ENCODE measurements at regions of chr14 and their contacts with region 1.

Region 1: DNA sequence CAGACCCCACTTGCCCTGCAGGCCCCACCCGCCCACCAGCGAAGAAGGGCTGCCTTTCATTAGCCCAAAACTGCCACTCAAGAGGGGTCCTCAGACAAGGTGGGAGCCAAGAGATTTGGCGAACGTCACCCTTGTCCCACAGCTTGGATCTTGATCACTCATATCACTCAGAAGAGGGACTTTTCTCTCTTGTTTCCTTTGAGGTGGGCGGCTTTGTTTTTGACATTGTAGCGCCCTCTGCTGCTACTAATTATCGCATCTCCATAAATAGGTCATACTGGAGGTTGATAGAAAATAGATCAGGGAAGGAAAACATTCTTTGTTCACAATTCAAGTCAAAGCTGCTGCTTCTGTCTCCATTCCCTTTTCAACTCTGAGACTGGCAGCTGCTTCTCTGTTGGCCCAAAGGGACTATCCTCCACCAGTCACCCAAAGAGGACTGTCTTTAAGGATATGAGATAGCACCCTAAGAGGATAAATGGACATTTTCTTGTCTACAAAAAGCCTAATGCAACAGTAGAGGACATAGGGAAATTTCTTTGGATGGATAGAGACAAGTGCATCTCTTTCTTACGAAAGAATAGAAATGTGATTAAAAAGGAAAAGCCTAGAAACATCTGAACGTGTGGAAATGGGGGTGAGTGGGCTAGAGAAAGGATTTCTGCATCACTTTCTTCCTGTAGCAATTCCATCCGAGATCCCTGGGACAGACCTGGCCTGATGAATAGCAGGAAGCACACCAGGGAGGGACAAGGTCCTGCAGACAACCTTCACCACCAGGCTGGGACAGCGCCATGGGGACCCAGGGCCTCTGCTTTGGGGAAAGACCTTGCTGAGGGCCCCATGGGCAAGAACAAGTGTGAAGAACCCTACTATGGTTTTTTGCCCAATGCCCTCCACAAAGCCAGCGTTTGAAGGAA is 115.8 kb downstream of the DAD1 start:
- DNase-seq: peak in 1 of 2 experiments; percentile 66
- H3K4me3 ChIP-seq: no peak overlapping the region
- H3K27ac ChIP-seq: no peak overlapping the region
- H3K4me1 ChIP-seq: peaks cover 0 to 4% (median under 1%) of the 10 kb centered on the region in 4 experiments; a peak in 2 of 7 replicates
- H3K27me3 ChIP-seq: no peaks in the 10 kb centered on the region; a peak in 1 of 7 replicates
- CTCF ChIP-seq: peak in 2 of 3 experiments; percentile 63 to 75; a peak in 3 of 4 replicates
- EP300 ChIP-seq: no peak
- POLR2A ChIP-seq: no peak
- RAD21 ChIP-seq: peak; percentile 84 to 87

Region 2: DNA sequence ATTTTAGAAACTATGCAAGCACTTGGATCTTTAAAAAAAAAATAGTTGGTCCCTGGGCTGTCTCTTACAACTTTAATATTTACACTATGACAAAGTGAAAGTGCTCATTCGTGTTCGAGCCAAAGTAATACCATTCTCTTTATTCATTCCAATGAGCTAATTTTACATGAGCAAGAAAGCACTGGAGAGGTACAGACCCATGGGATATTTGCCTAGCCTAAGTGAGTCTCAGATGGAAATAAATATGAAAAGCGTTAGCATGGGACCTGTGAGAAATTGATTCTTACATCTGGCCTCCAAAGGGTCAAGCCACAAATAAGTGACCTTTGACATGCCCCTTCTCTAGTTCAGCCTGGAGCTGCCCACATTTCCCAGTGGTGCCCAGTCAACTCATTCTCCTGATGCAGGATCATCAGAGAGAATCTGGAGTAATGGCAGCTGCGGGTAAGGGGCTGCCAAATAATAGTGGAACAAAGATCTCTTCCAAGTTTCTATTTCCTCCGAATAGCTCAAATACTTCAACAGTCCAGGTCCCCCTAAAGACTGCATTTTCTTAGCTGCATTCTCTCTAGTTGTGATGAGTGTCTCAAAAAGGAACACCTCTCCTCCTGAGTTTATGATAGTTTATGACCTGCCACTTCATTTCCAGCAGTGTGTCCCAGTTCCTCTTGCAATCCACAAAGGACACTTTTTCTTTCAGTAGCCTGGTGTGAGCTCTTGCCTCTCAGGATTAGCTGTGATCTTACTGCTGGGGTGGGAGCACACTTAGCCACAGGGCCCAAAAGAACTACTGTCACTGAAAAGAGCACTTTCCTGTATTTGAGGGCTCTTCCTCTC is 92.4 kb before region 1 on chr14:
- CTCF ChIA-PET with region 1: interaction called, 24 read pairs
- POLR2A ChIA-PET with region 1: no interaction called
- DNase-seq: no peak
- H3K4me3 ChIP-seq: no peak overlapping the region
- H3K27ac ChIP-seq: no peak overlapping the region
- H3K4me1 ChIP-seq: no peaks in the 10 kb centered on the region
- H3K27me3 ChIP-seq: no peaks in the 10 kb centered on the region
- CTCF ChIP-seq: no peak
- EP300 ChIP-seq: no peak
- POLR2A ChIP-seq: no peak
- RAD21 ChIP-seq: no peak

Region 3: GRCh38 chr14:22400655-22401259 is 72.4 kb before region 1 on chr14:
- CTCF ChIA-PET with region 1: interaction called, 18 read pairs
- POLR2A ChIA-PET with region 1: no interaction called
- DNase-seq: no peak
- H3K4me3 ChIP-seq: no peak overlapping the region
- H3K27ac ChIP-seq: no peak overlapping the region
- H3K4me1 ChIP-seq: no peaks in the 10 kb centered on the region
- H3K27me3 ChIP-seq: no peaks in the 10 kb centered on the region
- CTCF ChIP-seq: no peak
- EP300 ChIP-seq: no peak
- POLR2A ChIP-seq: no peak
- RAD21 ChIP-seq: no peak

Region 4: DNA sequence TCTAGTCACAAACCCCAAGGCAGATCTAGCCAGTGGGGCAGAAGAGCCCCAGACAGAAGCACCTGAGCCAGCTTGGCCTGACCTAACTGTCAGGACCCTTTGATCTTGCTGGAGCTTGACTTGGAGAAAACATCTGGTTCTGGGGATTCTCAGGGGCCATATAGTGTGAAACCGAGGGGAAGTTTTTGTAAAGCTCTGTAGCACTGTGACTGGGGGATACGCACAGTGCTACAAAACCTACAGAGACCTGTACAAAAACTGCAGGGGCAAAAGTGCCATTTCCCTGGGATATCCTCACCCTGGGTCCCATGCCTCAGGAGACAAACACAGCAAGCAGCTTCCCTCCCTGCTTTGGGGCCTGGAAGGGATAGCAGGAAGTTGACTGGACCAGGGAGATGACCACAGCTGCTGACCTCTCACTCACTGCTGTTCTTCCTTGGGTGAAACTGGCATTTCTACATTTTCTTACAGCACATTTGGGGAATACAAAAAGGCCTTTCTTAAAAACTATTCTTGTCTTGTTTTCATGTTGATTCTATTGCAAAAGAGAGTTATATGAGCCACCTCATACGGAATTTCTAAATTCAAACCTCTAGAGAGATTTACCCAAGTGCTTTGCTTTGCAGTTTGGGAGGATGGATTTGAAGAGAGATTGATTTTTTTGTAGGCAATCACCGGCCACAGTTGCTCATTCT is 24.1 kb before region 1 on chr14:
- CTCF ChIA-PET with region 1: interaction called, 25 read pairs
- POLR2A ChIA-PET with region 1: no interaction called
- DNase-seq: no peak
- H3K4me3 ChIP-seq: no peak overlapping the region
- H3K27ac ChIP-seq: no peak overlapping the region
- H3K4me1 ChIP-seq: no peaks in the 10 kb centered on the region
- H3K27me3 ChIP-seq: no peaks in the 10 kb centered on the region; a peak in 1 of 7 replicates
- CTCF ChIP-seq: no peak
- EP300 ChIP-seq: no peak
- POLR2A ChIP-seq: no peak
- RAD21 ChIP-seq: no peak

Region 5: GRCh38 chr14:22505697-22506377 is 32.6 kb after region 1 on chr14:
- CTCF ChIA-PET with region 1: interaction called, 14 read pairs
- POLR2A ChIA-PET with region 1: no interaction called
- DNase-seq: no peak
- H3K4me3 ChIP-seq: no peak overlapping the region
- H3K27ac ChIP-seq: no peak overlapping the region
- H3K4me1 ChIP-seq: peaks cover 0 to 3% (median 1%) of the 10 kb centered on the region in 4 experiments; a peak in 3 of 7 replicates
- H3K27me3 ChIP-seq: no peaks in the 10 kb centered on the region; a peak in 1 of 7 replicates
- CTCF ChIP-seq: no peak
- EP300 ChIP-seq: no peak
- POLR2A ChIP-seq: peak in 1 of 2 experiments; percentile 66; a peak in 2 of 3 replicates
- RAD21 ChIP-seq: no peak

Region 6: GRCh38 chr14:22589096-22589839 is 116.1 kb after region 1 on chr14 and contains the start of gene DAD1:
- CTCF ChIA-PET with region 1: no interaction called
- POLR2A ChIA-PET with region 1: no interaction called
- DNase-seq: peak; percentile 98 to 99
- H3K4me3 ChIP-seq: peak within 1 kb of the TSS; percentile 81 to 99 (median 98)
- H3K27ac ChIP-seq: peak within 1 kb of the TSS; percentile 82
- H3K4me1 ChIP-seq: peaks cover 0 to 3% (median under 1%) of the 10 kb centered on the region in 4 experiments; a peak in 3 of 7 replicates
- H3K27me3 ChIP-seq: no peaks in the 10 kb centered on the region
- CTCF ChIP-seq: no peak
- EP300 ChIP-seq: no peak; a peak in 1 of 3 replicates
- POLR2A ChIP-seq: peak; percentile 9 to 84
- RAD21 ChIP-seq: no peak
- total RNA-seq, gene DAD1: 131 and 133 TPM in 2 replicates

Region 7: DNA sequence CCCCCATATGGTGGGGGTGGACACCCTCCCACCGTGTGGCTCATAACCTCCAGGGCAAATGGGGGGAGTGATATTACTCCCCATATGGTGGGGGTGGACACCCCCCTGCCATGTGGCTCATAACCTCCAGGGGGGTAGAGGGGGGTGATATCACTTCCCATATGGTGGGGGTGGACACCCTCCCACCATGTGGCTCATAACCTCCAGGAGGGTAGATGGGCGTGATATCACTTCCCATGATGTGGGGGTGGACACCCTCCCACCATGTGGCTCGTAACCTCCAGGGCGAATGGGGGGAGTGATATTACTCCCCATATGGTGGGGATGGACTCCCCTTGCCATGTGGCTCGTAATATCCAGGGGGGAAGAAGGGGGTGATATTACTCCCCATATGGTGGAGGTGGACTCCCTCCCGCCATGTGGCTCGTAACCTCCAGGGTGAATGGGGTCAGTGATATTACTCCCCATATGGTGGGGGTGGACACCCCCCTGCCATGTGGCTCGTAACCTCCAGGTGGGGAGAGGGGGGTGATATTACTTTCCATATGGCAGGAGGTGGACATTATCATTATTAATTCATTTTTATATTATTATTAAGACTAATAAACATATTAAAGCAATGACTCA is 242.1 kb after region 1 on chr14:
- CTCF ChIA-PET with region 1: no interaction called
- POLR2A ChIA-PET with region 1: no interaction called
- DNase-seq: peak in 1 of 2 experiments; percentile 49
- H3K4me3 ChIP-seq: no peak overlapping the region
- H3K27ac ChIP-seq: no peak overlapping the region
- H3K4me1 ChIP-seq: no peaks in the 10 kb centered on the region
- H3K27me3 ChIP-seq: no peaks in the 10 kb centered on the region
- CTCF ChIP-seq: no peak
- EP300 ChIP-seq: no peak
- POLR2A ChIP-seq: no peak
- RAD21 ChIP-seq: no peak